ENCODE measurements at regions of chr17 and their contacts with region 1.

Region 1: GRCh38 chr17:81512560-81513371 is at the start of gene ACTG1:
- DNase-seq: peak; percentile 95
- ATAC-seq: peak; percentile 42
- H3K4me3 ChIP-seq: peak within 1 kb of the TSS; percentile 71 to 96 (median 86)
- H3K4me3 Mint-ChIP-seq: peak within 1 kb of the TSS; percentile 97
- H3K27ac ChIP-seq: peak within 1 kb of the TSS; percentile 89 to 97
- H3K27ac Mint-ChIP-seq: peak within 1 kb of the TSS; percentile 96
- H3K4me1 ChIP-seq: peaks cover 46 to 69% of the 10 kb centered on the region in 2 donors
- H3K4me1 Mint-ChIP-seq: peaks cover 67% of the 10 kb centered on the region
- H3K27me3 ChIP-seq: no peaks in the 10 kb centered on the region
- H3K27me3 Mint-ChIP-seq: no peaks in the 10 kb centered on the region
- CTCF ChIP-seq: no peak
- total RNA-seq, gene ACTG1: 773 and 803 TPM in 2 replicates

Region 2: DNA sequence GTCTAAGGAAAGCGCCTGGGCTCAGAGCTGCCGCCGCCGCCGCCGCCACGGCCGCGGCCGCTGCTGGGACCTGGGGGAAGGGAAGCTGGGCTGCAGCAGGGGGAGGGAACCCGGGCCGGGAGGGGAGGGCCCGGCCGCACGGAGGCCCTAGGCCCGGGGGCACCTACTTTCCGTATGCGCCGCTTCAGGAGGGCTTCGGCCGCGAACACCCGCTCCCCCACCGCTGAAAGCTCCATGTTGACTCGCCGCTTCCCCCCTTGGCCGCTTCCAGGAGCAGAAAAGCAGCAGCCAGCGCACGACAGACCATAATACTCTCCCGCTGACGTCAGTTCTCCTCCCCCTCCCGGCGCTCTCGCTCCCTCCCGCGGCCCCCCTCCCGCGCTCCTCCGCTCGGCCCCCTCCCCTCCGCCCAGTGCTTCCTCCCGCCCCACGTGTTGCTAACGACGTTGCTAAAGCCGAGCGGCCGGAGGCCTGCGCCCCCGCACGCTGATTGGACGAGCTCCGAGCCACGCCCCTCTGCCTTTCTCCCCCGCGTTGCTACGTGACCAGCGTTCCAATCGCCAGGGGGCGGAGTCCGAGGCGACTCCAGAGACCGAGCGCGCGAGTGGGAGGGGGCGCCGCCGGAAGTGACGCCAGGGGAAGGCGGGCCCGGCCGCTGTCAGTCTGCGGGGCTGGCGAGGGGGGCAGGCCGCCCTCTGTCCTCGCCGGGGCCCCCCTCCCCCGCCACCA is 1715.8 kb before region 1 on chr17 and contains the start of gene CBX8:
- CTCF ChIA-PET with region 1: no interaction called
- POLR2A ChIA-PET with region 1: no interaction called
- intact Hi-C with region 1: loop called (anchors 5 kb)
- DNase-seq: peak; percentile 99
- ATAC-seq: peak; percentile 90
- H3K4me3 ChIP-seq: peak within 1 kb of the TSS; percentile 65 to 90 (median 71)
- H3K4me3 Mint-ChIP-seq: peak within 1 kb of the TSS; percentile 91
- H3K27ac ChIP-seq: peak within 1 kb of the TSS; percentile 50 to 68
- H3K27ac Mint-ChIP-seq: peak within 1 kb of the TSS; percentile 95
- H3K4me1 ChIP-seq: peaks cover 46 to 50% of the 10 kb centered on the region in 2 donors
- H3K4me1 Mint-ChIP-seq: peaks cover 41% of the 10 kb centered on the region
- H3K27me3 ChIP-seq: peaks cover 0 to 61% (median 46%) of the 10 kb centered on the region in 4 experiments
- H3K27me3 Mint-ChIP-seq: peaks cover 39% of the 10 kb centered on the region
- CTCF ChIP-seq: no peak
- total RNA-seq, gene CBX8: 6.8 and 10.3 TPM in 2 replicates

Region 3: DNA sequence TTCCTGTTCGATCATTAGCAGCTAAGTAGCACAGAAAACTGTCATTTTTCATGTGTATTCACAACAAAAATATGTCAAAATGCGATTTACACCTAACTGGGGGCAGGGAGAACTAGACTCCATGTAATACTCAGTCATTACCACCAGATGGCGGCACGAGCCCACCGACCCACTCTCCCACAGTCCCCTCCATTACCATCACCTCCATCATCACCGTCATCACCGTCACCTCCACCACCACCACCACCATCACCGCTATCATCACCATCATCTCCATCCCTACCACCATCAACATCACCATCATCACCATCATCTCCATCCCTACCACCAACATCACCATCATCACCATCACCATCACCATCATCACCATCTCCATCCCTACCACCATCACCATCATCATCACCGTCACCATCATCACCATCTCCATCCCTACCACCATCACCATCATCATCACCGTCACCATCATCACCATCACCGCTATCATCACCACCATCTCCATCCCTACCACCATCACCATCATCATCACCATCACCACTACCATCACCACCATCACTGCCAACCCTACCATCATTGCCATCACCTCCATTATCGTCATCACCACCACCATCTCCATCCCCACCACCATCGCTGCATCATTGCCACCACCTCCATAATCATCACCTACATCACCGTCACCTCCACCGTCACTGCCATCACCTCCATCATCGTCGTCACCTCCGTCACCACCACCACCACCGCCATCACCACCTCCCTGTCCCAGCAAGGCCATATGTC is 259.2 kb before region 1 on chr17:
- CTCF ChIA-PET with region 1: interaction called, 5 read pairs
- POLR2A ChIA-PET with region 1: interaction called, 3 read pairs
- intact Hi-C with region 1: loop called (anchors 10 kb)
- DNase-seq: peak; percentile 77
- ATAC-seq: peak; percentile 83
- H3K4me3 ChIP-seq: no peak overlapping the region
- H3K4me3 Mint-ChIP-seq: no peak overlapping the region
- H3K27ac ChIP-seq: no peak overlapping the region
- H3K27ac Mint-ChIP-seq: peak overlapping the region; percentile 17
- H3K4me1 ChIP-seq: peaks cover 0 to 11% of the 10 kb centered on the region in 2 donors
- H3K4me1 Mint-ChIP-seq: peaks cover 7% of the 10 kb centered on the region
- H3K27me3 ChIP-seq: no peaks in the 10 kb centered on the region
- H3K27me3 Mint-ChIP-seq: no peaks in the 10 kb centered on the region
- CTCF ChIP-seq: peak; percentile 83

Region 4: DNA sequence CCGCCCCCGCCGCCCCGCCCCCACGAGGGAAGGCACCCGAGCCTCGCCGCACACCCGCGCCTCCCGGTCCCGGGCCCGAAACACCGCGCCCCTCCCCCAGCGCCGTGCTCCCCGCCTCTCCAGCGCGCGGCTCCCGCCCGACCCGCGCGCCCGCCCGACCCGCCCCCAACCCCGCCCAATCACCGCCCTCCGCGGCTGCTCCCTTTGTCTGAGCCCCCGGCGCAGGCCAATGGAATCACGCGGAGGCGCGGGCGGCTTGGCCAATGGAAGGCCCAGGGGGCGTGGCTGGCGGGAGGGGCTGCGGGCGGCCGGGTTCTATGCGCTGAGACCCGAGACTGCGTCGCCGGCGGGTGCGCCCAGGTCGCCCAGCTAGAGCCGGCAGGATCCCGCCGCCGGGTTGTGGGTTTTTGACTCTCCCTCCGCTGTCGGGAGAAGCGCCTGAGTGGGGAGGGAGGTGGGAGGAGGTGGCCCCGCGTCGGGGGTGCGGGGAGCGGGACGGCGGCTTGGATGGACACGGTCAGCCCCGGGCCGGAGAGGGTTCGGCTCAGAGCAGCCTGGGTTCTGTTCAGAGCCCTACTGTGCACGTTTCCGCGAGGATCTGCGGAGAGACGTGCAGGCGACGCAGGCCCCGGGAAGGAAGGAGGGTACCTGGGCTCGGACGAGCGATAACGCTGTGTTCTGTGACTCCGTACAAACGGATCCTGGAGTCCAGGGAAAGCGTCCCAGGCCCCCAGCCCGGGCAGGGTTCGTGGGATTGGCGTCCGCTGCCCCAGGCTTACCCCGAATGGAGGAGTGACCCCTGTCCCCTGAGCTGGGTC is 166.5 kb before region 1 on chr17:
- CTCF ChIA-PET with region 1: interaction called, 3 read pairs
- POLR2A ChIA-PET with region 1: interaction called, 3 read pairs
- intact Hi-C with region 1: loop called (anchors 1 kb)
- DNase-seq: peak; percentile 93
- ATAC-seq: peak; percentile 94
- H3K4me3 ChIP-seq: peak overlapping the region in 4 of 5 experiments; percentile 41 to 61 (median 54)
- H3K4me3 Mint-ChIP-seq: peak overlapping the region; percentile 69
- H3K27ac ChIP-seq: no peak overlapping the region
- H3K27ac Mint-ChIP-seq: no peak overlapping the region
- H3K4me1 ChIP-seq: peaks cover 34 to 36% of the 10 kb centered on the region in 2 donors
- H3K4me1 Mint-ChIP-seq: peaks cover 21% of the 10 kb centered on the region
- H3K27me3 ChIP-seq: peaks cover 0 to 53% (median 32%) of the 10 kb centered on the region in 4 experiments
- H3K27me3 Mint-ChIP-seq: peaks cover 32% of the 10 kb centered on the region
- CTCF ChIP-seq: no peak

Region 5: GRCh38 chr17:81484195-81484979 is 28.4 kb before region 1 on chr17:
- CTCF ChIA-PET with region 1: interaction called, 10 read pairs
- POLR2A ChIA-PET with region 1: interaction called, 8 read pairs
- intact Hi-C with region 1: loop called (anchors 1 kb)
- DNase-seq: peak; percentile 93
- ATAC-seq: peak; percentile 65
- H3K4me3 ChIP-seq: peak overlapping the region in 4 of 5 experiments; percentile 21 to 66 (median 48)
- H3K4me3 Mint-ChIP-seq: peak overlapping the region; percentile 57
- H3K27ac ChIP-seq: no peak overlapping the region
- H3K27ac Mint-ChIP-seq: no peak overlapping the region
- H3K4me1 ChIP-seq: peaks cover 46 to 53% of the 10 kb centered on the region in 2 donors
- H3K4me1 Mint-ChIP-seq: peaks cover 26% of the 10 kb centered on the region
- H3K27me3 ChIP-seq: peaks cover 0 to 28% (median 12%) of the 10 kb centered on the region in 4 experiments
- H3K27me3 Mint-ChIP-seq: peaks cover 13% of the 10 kb centered on the region
- CTCF ChIP-seq: peak; percentile 99

Region 6: GRCh38 chr17:81553018-81553615 is 40.4 kb after region 1 on chr17:
- CTCF ChIA-PET with region 1: interaction called, 25 read pairs
- POLR2A ChIA-PET with region 1: interaction called, 33 read pairs
- intact Hi-C with region 1: loop called (anchors 1 kb)
- DNase-seq: peak; percentile 92
- ATAC-seq: peak; percentile 64
- H3K4me3 ChIP-seq: peak overlapping the region; percentile 63 to 97 (median 91)
- H3K4me3 Mint-ChIP-seq: peak overlapping the region; percentile 92
- H3K27ac ChIP-seq: peak overlapping the region; percentile 66 to 86
- H3K27ac Mint-ChIP-seq: peak overlapping the region; percentile 93
- H3K4me1 ChIP-seq: peaks cover 18 to 23% of the 10 kb centered on the region in 2 donors
- H3K4me1 Mint-ChIP-seq: peaks cover 31% of the 10 kb centered on the region
- H3K27me3 ChIP-seq: no peaks in the 10 kb centered on the region
- H3K27me3 Mint-ChIP-seq: no peaks in the 10 kb centered on the region
- CTCF ChIP-seq: no peak

Region 7: GRCh38 chr17:81711814-81712467 is 199.2 kb after region 1 on chr17 and contains the start of gene SLC25A10:
- CTCF ChIA-PET with region 1: no interaction called
- POLR2A ChIA-PET with region 1: no interaction called
- intact Hi-C with region 1: loop called (anchors 2 kb)
- DNase-seq: peak; percentile 87
- ATAC-seq: peak; percentile 89
- H3K4me3 ChIP-seq: peak within 1 kb of the TSS in 4 of 5 experiments; percentile 35 to 80 (median 62)
- H3K4me3 Mint-ChIP-seq: peak within 1 kb of the TSS; percentile 89
- H3K27ac ChIP-seq: no peak within 1 kb of the TSS
- H3K27ac Mint-ChIP-seq: peak within 1 kb of the TSS; percentile 78
- H3K4me1 ChIP-seq: peaks cover 15 to 25% of the 10 kb centered on the region in 2 donors
- H3K4me1 Mint-ChIP-seq: peaks cover 12% of the 10 kb centered on the region
- H3K27me3 ChIP-seq: peaks cover 0 to 3% (median 0%) of the 10 kb centered on the region in 4 experiments
- H3K27me3 Mint-ChIP-seq: no peaks in the 10 kb centered on the region
- CTCF ChIP-seq: peak; percentile 15
- total RNA-seq, gene SLC25A10: 5.0 and 6.5 TPM in 2 replicates

Measured in B cell (primary cell).